ENCODE measurements at regions of chr12 and their contacts with region 1.

Region 1: DNA sequence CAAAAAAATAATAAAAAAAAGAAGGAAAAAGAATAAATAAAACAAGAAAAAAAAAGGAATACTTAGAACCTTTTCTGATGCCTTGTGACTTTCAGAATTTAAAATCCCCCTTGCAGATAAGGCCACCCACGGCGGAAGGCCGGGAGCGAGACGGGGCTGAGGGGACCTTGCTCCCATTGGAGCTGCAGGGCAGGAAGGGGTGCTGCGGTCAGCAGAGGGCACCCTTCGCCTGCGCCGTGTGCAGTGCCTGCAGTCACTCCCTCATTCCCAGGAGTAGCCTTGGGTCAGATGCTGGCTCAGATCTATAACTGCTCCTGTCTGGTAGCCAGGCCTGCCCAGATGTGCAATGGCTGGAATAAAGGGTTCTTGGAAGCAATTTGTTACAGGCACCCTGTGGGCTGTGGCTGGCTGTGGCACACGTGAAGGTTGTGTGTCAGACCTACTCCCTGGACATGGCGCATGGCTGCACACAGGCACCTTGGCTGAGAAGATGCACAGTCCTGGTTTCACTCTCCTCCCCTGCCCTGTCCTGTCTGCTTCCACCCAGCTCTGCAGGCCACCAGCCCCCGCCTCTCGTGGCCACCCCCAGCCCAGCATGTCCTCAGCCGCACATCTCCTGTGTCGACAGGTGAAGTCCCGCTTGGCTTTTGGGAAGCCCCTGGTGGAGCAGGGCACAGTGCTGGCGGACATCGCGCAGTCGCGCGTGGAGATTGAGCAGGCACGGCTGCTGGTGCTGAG is 13.4 kb upstream of the ALDH2 start:
- DNase-seq: peak in 1 of 2 experiments; percentile 80
- H3K4me3 ChIP-seq: no peak overlapping the region
- H3K27ac ChIP-seq: no peak overlapping the region
- H3K4me1 ChIP-seq: peaks cover 0 to 10% (median 4%) of the 10 kb centered on the region in 4 experiments; a peak in 2 of 7 replicates
- H3K27me3 ChIP-seq: no peaks in the 10 kb centered on the region
- CTCF ChIP-seq: peak; percentile 90 to 99 (median 95)
- EP300 ChIP-seq: no peak
- POLR2A ChIP-seq: no peak
- RAD21 ChIP-seq: peak; percentile 96 to 97

Region 2: DNA sequence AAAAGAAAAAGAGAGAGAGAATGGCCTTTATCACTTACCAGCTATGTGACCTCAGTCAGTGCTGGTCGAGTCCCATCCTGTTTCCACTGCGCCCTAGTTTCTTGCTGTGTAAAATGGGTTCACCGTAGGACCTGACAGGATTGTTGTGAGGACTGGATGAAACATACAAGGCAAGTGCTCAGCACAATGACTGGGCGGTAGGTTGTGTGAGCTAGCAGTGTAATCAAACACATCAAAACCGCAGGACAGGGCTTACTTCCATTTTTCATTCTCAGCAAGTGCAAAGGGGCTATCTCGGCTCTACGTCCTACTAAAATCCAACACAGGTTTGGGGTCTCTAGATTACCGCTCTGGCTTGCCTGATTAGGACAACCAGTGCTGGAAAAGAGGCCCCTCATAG is 117.8 kb before region 1 on chr12:
- CTCF ChIA-PET with region 1: no interaction called
- POLR2A ChIA-PET with region 1: no interaction called
- DNase-seq: no peak
- H3K4me3 ChIP-seq: no peak overlapping the region
- H3K27ac ChIP-seq: no peak overlapping the region
- H3K4me1 ChIP-seq: peaks cover 5 to 16% (median 11%) of the 10 kb centered on the region in 4 experiments
- H3K27me3 ChIP-seq: no peaks in the 10 kb centered on the region; a peak in 1 of 7 replicates
- CTCF ChIP-seq: no peak
- EP300 ChIP-seq: no peak
- POLR2A ChIP-seq: no peak
- RAD21 ChIP-seq: no peak

Region 3: DNA sequence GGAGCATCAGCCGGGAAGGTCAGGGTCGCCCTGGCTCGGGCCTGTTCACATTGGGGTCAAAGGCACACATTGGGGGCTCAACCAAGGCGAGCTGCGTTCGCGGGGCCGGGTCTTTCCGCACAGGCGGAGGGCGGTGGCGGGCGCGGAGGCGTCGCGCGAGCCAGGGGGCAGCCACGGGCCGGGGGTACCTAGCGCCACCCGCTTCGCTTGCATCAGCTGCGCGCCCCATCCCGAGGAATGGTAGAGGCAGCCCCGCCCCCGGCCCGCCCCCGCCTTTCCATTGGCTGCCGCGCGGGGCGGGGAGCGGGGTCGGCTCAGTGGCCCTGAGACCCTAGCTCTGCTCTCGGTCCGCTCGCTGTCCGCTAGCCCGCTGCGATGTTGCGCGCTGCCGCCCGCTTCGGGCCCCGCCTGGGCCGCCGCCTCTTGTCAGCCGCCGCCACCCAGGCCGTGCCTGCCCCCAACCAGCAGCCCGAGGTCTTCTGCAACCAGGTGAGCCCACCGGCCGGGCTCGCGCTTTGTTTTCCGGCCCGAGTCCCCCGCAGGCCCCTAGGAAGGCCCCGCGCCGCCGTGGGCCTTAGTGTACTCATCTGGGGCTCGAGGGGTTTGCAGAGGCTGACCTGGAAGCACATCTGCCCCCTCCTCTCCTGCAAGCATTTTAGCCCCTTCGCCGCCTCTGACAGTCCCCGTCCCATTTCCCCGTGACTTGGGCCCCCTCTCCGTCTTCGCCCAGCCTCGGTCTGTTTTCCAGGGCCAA is 13.5 kb after region 1 on chr12 and contains the start of gene ALDH2:
- CTCF ChIA-PET with region 1: interaction called, 23 read pairs
- POLR2A ChIA-PET with region 1: interaction called, 18 read pairs
- DNase-seq: peak; percentile 50 to 88
- H3K4me3 ChIP-seq: peak within 1 kb of the TSS; percentile 62 to 85 (median 70)
- H3K27ac ChIP-seq: peak within 1 kb of the TSS; percentile 47; the same call in 1 of the 2 replicates
- H3K4me1 ChIP-seq: peaks cover 0 to 11% (median 3%) of the 10 kb centered on the region in 4 experiments; a peak in 4 of 7 replicates
- H3K27me3 ChIP-seq: peaks cover 0 to 5% (median 0%) of the 10 kb centered on the region in 4 experiments; a peak in 3 of 7 replicates
- CTCF ChIP-seq: no peak
- EP300 ChIP-seq: peak in 1 of 2 experiments; percentile 84; a peak in 1 of 3 replicates
- POLR2A ChIP-seq: peak; percentile 62 to 89
- RAD21 ChIP-seq: no peak
- total RNA-seq, gene ALDH2: 40.4 and 43.8 TPM in 2 replicates

Region 4: GRCh38 chr12:111788178-111788654 is 34.9 kb after region 1 on chr12:
- CTCF ChIA-PET with region 1: interaction called, 90 read pairs
- POLR2A ChIA-PET with region 1: interaction called, 6 read pairs
- DNase-seq: no peak
- H3K4me3 ChIP-seq: no peak overlapping the region
- H3K27ac ChIP-seq: no peak overlapping the region
- H3K4me1 ChIP-seq: no peaks in the 10 kb centered on the region
- H3K27me3 ChIP-seq: no peaks in the 10 kb centered on the region
- CTCF ChIP-seq: peak in 2 of 3 experiments; percentile 35 to 54; a peak in 3 of 4 replicates
- EP300 ChIP-seq: no peak
- POLR2A ChIP-seq: no peak
- RAD21 ChIP-seq: peak; percentile 66 to 75

Region 5: DNA sequence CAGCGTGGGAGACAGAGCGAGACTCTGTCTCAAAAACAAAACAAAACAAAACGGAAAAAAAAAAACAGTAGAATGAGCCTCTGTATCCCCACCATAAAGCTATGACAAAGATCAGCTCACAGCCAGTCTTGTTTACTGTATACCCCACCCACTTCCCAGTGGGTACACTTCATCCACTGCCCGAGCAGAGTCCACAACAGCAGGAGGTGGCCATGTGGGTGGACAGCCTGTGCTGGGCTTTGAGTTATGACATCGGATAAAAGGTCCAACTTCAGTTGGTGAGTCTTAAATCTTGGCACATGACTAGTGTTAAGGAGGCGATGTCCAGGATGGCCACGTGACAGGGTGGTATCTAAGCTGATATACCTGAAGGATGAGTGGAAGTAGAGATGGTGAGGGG is 53.9 kb after region 1 on chr12:
- CTCF ChIA-PET with region 1: interaction called, 165 read pairs
- POLR2A ChIA-PET with region 1: interaction called, 11 read pairs
- DNase-seq: no peak
- H3K4me3 ChIP-seq: no peak overlapping the region
- H3K27ac ChIP-seq: no peak overlapping the region
- H3K4me1 ChIP-seq: no peaks in the 10 kb centered on the region
- H3K27me3 ChIP-seq: no peaks in the 10 kb centered on the region
- CTCF ChIP-seq: no peak
- EP300 ChIP-seq: no peak
- POLR2A ChIP-seq: no peak
- RAD21 ChIP-seq: no peak

Region 6: DNA sequence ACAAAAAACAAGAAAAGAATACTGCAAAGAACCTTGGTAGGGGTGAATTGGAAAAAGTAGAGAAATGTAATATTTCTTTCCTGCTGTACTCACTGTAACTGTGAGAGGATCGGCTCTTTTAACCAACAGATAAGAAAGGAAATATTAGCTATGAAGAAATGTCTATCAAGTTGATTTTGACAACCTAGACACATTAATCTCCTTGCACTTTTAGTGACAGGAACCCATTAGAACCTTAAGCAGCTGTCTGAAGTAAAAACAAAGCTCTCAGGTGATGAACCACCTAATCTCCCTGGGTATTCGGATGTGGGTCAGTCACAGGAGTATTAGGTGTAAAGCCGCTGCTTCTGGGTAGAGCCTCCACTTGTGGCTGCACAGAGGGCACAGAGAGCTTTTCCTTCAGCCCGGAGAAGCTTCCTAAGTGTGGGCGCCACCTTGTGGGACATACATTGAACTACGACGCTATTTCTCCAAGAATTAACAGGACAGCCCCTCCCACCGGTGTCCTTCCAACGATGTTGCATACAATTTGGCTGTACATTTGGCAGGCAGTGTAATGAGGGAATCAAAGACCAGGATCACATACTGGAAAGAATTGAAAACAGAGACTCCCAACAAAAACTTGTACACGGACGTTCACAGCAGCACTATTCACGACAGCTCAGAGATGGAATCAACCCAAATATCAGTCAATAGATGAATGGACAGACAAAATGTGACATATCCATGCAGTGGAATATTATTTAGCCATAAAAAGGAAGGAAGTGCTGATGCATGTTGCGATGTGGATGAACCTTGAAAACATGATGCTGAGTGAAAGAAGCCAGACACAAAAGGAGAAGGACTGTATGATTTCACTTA is 59.8 kb after region 1 on chr12:
- CTCF ChIA-PET with region 1: interaction called, 165 read pairs
- POLR2A ChIA-PET with region 1: interaction called, 11 read pairs
- DNase-seq: peak; percentile 50 to 76
- H3K4me3 ChIP-seq: no peak overlapping the region
- H3K27ac ChIP-seq: no peak overlapping the region
- H3K4me1 ChIP-seq: no peaks in the 10 kb centered on the region
- H3K27me3 ChIP-seq: no peaks in the 10 kb centered on the region
- CTCF ChIP-seq: peak; percentile 69 to 88 (median 86)
- EP300 ChIP-seq: no peak
- POLR2A ChIP-seq: no peak
- RAD21 ChIP-seq: peak; percentile 84 to 85

Region 7: DNA sequence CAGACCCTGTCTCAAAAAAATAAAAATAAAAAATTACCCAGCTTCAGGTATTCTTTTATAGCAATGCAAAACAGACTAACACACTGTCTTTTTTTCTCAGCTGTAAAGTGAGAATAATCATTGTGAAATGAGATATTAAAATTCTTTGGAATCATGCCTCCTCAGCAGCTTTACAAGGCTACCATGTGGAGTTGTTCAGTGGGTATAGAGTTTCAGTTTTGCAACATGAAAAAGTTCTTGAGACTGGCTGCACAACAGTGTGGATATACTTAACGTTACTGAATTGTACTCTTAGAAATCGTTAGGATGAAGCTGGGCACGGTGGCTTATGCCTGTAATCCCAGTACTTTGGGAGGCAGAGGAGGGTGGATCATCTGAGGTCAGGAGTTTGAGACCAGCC is 73.0 kb after region 1 on chr12:
- CTCF ChIA-PET with region 1: interaction called, 13 read pairs
- POLR2A ChIA-PET with region 1: no interaction called
- DNase-seq: no peak
- H3K4me3 ChIP-seq: no peak overlapping the region
- H3K27ac ChIP-seq: no peak overlapping the region
- H3K4me1 ChIP-seq: peaks cover 0 to 3% (median 0%) of the 10 kb centered on the region in 4 experiments; a peak in 1 of 7 replicates
- H3K27me3 ChIP-seq: no peaks in the 10 kb centered on the region
- CTCF ChIP-seq: no peak
- EP300 ChIP-seq: no peak
- POLR2A ChIP-seq: no peak
- RAD21 ChIP-seq: no peak